Activated naive CD4-positive, alpha-beta T cell treated with anti-CD3 and anti-CD28 coated beads for 36 hours (primary cell): ENCODE measurements at regions of chr11 and their contacts with region 1.

Region 1: GRCh38 chr11:111926505-111927391 is 8.0 kb downstream of the C11orf52 start:
- DNase-seq: peak; percentile 95
- H3K4me3 Mint-ChIP-seq: peak overlapping the region; percentile 82
- H3K27ac Mint-ChIP-seq: peak overlapping the region; percentile 88
- H3K4me1 Mint-ChIP-seq: peaks cover 12% of the 10 kb centered on the region
- H3K27me3 Mint-ChIP-seq: no peaks in the 10 kb centered on the region

Region 2: DNA sequence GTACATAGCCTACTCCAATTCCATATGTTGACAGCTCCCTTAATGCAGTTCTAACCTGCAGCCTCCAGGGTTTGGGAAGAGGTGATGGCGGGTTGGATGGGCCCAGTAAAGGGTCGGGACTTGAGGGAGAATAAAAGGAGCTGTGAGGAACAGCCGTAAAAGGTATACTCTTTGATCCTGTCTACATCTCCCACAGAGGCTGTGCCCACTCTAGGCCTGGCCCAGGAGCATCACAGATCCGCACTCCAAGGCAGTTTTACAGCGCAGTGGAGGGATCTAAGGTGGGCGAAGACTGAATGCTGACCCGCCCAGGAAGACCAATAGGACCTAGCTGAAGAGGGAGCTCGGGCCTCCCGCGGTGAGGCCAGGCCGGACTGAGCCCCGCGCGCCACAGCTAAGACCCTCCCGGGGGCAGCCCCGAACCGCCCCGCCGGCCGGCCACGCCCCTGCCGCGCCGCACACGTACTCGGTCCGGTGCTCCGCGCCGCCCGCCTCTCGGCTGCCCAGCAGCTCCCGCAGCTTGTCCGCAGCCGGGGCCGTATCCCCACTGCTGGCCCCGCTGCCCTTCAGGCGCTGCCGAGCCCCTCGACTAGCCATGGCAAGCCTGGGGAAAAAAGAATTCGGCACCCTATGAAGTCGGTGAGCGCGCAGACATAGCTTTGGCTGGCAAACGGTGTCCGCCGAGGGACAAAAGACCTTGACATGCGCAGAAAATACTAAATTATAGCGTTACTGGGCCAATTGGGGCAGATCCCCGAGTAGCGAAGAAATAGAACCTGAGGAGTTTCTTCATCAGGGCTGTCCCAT is 55.7 kb before region 1 on chr11 and contains the start of gene ALG9:
- CTCF ChIA-PET with region 1: interaction called, 5 read pairs
- intact Hi-C with region 1: loop called (anchors 1 kb)
- DNase-seq: peak; percentile 93
- H3K4me3 Mint-ChIP-seq: peak within 1 kb of the TSS; percentile 89
- H3K27ac Mint-ChIP-seq: peak within 1 kb of the TSS; percentile 83
- H3K4me1 Mint-ChIP-seq: peaks cover 25% of the 10 kb centered on the region
- H3K27me3 Mint-ChIP-seq: no peaks in the 10 kb centered on the region
- total RNA-seq, gene ALG9: 21.3 to 21.9 TPM

Region 3: GRCh38 chr11:111944651-111945051 is 17.9 kb after region 1 on chr11:
- CTCF ChIA-PET with region 1: interaction called, 8 read pairs
- intact Hi-C with region 1: loop called (anchors 2 kb)
- DNase-seq: no peak
- H3K4me3 Mint-ChIP-seq: no peak overlapping the region
- H3K27ac Mint-ChIP-seq: peak overlapping the region; percentile 82
- H3K4me1 Mint-ChIP-seq: peaks cover 22% of the 10 kb centered on the region
- H3K27me3 Mint-ChIP-seq: no peaks in the 10 kb centered on the region

Region 4: GRCh38 chr11:111982019-111982464 is 55.3 kb after region 1 on chr11:
- CTCF ChIA-PET with region 1: interaction called, 125 read pairs
- intact Hi-C with region 1: loop called (anchors 1 kb)
- DNase-seq: peak; percentile 85
- H3K4me3 Mint-ChIP-seq: no peak overlapping the region
- H3K27ac Mint-ChIP-seq: no peak overlapping the region
- H3K4me1 Mint-ChIP-seq: peaks cover 12% of the 10 kb centered on the region
- H3K27me3 Mint-ChIP-seq: peaks cover 26% of the 10 kb centered on the region

Region 5: DNA sequence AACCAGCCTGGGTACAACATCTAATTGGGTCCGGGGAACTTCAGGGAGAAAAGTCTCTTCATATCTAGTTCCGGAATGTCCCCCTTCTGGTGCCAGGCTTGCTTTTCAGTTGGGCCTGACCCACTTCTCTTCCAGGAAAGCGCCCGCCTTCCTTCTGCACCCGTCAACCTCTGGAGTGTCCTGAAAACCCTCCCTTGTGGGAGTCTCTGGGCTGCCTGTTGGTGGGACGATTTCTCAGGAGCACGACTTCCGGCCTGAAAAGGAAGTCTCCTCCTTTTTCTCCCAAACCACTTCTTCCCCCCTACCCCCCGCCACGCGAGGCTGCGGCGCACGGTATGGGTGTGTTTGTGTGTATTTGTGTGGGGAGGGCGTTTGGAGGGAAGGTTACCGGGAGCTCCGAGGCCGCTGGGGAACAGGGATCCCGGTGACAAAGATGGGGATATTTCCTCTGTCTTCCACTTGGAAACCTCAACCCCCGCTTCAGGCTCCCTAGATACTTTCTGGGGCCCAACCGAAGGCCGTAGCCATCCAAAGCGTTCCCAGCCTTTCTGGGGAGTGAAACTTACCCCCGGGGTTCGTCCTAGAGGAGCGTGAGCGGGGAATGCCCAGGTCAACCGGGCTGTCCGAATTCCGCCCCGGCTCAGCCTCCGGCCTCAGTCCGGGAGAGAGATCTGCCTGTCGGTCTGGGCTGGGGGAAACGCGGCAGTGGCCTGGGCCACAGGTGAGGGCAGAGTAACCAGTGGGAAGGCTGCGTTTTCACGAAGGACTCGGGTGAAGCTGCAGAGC is 147.5 kb after region 1 on chr11 and contains the start of gene NKAPD1:
- CTCF ChIA-PET with region 1: interaction called, 5 read pairs
- intact Hi-C with region 1: loop called (anchors 1 kb)
- DNase-seq: peak; percentile 86
- H3K4me3 Mint-ChIP-seq: peak within 1 kb of the TSS; percentile 97
- H3K27ac Mint-ChIP-seq: peak within 1 kb of the TSS; percentile 97
- H3K4me1 Mint-ChIP-seq: peaks cover 28% of the 10 kb centered on the region
- H3K27me3 Mint-ChIP-seq: peaks cover 6% of the 10 kb centered on the region
- total RNA-seq, gene NKAPD1: 14.8 to 19.6 TPM

Region 6: GRCh38 chr11:112265721-112266409 is 339.1 kb after region 1 on chr11:
- CTCF ChIA-PET with region 1: no interaction called
- intact Hi-C with region 1: no loop called
- DNase-seq: no peak
- H3K4me3 Mint-ChIP-seq: no peak overlapping the region
- H3K27ac Mint-ChIP-seq: no peak overlapping the region
- H3K4me1 Mint-ChIP-seq: no peaks in the 10 kb centered on the region
- H3K27me3 Mint-ChIP-seq: no peaks in the 10 kb centered on the region

Region 7: GRCh38 chr11:112280268-112281126 is 353.7 kb after region 1 on chr11:
- CTCF ChIA-PET with region 1: interaction called, 5 read pairs
- intact Hi-C with region 1: loop called (anchors 2 kb)
- DNase-seq: peak; percentile 79
- H3K4me3 Mint-ChIP-seq: peak overlapping the region; percentile 76
- H3K27ac Mint-ChIP-seq: no peak overlapping the region
- H3K4me1 Mint-ChIP-seq: peaks cover 2% of the 10 kb centered on the region
- H3K27me3 Mint-ChIP-seq: no peaks in the 10 kb centered on the region